Activated CD4-positive, alpha-beta memory T cell treated with anti-CD3 and anti-CD28 coated beads, Interleukin-2, amount 10 ng/mL, durations not matched to agents 7 days and 5 days (primary cell): ENCODE measurements at regions of chr1 and their contacts with region 1.

Region 1: GRCh38 chr1:153532769-153533599 is 2.8 kb downstream of the S100A6 start:
- DNase-seq: peak; percentile 89
- H3K4me3 Mint-ChIP-seq: peak overlapping the region; percentile 99
- H3K27ac Mint-ChIP-seq: peak overlapping the region; percentile 94
- H3K4me1 Mint-ChIP-seq: peaks cover 69% of the 10 kb centered on the region
- H3K27me3 Mint-ChIP-seq: no peaks in the 10 kb centered on the region

Region 2: GRCh38 chr1:153488731-153489130 is 44.3 kb before region 1 on chr1:
- CTCF ChIA-PET with region 1: no interaction called
- POLR2A ChIA-PET with region 1: no interaction called
- DNase-seq: no peak
- H3K4me3 Mint-ChIP-seq: no peak overlapping the region
- H3K27ac Mint-ChIP-seq: no peak overlapping the region
- H3K4me1 Mint-ChIP-seq: no peaks in the 10 kb centered on the region
- H3K27me3 Mint-ChIP-seq: peaks cover 31% of the 10 kb centered on the region

Region 3: DNA sequence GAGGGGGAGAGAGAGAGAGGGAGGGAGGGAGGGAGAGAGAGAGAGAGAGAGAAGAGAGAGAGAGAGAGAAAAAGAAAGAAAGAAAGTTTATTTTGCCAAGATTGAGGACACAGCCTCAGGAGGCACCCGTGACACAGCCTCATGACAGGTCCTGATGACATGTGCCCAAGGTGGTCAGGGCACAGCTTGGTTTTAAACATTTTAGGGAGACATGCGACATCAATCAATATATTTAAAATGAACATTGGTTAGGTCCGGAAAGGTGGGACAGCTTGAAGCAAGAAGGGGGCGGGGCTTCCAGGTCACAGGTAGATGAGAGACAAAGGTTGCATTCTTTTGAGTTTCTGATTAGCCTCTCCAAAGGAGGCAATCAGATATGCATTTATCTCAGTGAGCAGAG is 12.8 kb before region 1 on chr1:
- CTCF ChIA-PET with region 1: interaction called, 19 read pairs
- POLR2A ChIA-PET with region 1: interaction called, 38 read pairs
- DNase-seq: no peak
- H3K4me3 Mint-ChIP-seq: no peak overlapping the region
- H3K27ac Mint-ChIP-seq: no peak overlapping the region
- H3K4me1 Mint-ChIP-seq: peaks cover 17% of the 10 kb centered on the region
- H3K27me3 Mint-ChIP-seq: peaks cover 1% of the 10 kb centered on the region

Region 4: DNA sequence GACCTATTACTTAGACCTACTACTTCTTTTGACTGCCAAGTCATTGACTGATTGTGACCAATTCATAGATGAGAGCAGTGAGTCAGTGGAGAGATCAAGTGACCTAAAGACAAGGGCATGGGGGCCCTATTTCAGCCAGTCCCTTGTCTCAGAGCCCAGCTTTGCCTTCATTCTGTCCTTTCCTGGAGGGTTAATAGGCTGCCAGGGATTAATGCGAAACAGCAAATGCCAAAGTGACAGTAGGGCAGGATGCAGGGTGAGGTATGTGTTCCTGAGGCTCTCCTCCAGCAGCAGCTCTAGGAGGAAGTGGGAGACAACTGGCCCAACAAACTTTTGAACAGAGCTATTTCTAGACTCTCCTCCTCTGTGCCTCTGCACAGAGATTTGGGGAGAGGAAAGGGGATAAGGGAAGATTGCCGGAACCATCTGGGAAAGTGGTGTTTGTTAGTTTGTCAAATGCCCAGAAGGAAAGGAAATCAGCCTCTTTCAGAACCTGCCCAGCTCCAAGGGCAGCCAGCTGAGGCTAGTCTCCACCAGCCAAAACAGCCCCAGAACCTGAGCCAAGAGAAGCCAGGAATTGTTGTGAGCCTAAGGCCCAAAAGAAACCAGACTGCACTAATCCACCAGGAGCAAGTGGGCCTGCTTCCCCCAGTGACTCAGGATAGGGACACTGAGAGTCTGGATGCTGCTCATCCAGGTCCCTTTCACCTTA is 21.0 kb after region 1 on chr1:
- CTCF ChIA-PET with region 1: interaction called, 117 read pairs
- POLR2A ChIA-PET with region 1: interaction called, 188 read pairs
- DNase-seq: no peak
- H3K4me3 Mint-ChIP-seq: no peak overlapping the region
- H3K27ac Mint-ChIP-seq: no peak overlapping the region
- H3K4me1 Mint-ChIP-seq: peaks cover 15% of the 10 kb centered on the region
- H3K27me3 Mint-ChIP-seq: peaks cover 3% of the 10 kb centered on the region

Region 5: GRCh38 chr1:153572569-153573015 is 39.6 kb after region 1 on chr1:
- CTCF ChIA-PET with region 1: interaction called, 202 read pairs
- POLR2A ChIA-PET with region 1: interaction called, 138 read pairs
- DNase-seq: peak; percentile 69
- H3K4me3 Mint-ChIP-seq: no peak overlapping the region
- H3K27ac Mint-ChIP-seq: peak overlapping the region; percentile 54
- H3K4me1 Mint-ChIP-seq: peaks cover 49% of the 10 kb centered on the region
- H3K27me3 Mint-ChIP-seq: peaks cover 9% of the 10 kb centered on the region

Region 6: DNA sequence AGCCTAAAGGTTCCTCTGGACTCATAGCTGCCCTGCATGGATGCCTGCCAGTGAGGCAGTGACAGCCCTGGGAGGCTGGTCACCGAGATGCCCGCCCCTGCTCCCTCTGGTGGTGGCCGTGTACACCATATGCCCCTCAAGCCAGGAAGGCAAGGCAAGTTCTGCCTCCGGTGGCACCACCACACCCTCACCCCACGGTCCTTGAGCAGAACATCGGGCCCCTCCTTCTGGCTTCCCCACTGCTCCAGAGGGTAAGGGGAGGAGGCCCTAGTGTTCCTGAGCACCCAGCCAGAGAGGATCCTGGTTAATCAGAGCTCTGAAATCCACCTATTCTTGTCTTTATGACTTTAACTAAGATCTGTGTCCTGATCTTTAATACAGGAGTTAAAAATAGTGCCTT is 84.7 kb after region 1 on chr1:
- CTCF ChIA-PET with region 1: interaction called, 51 read pairs
- POLR2A ChIA-PET with region 1: interaction called, 14 read pairs
- DNase-seq: peak; percentile 75
- H3K4me3 Mint-ChIP-seq: no peak overlapping the region
- H3K27ac Mint-ChIP-seq: no peak overlapping the region
- H3K4me1 Mint-ChIP-seq: peaks cover 4% of the 10 kb centered on the region
- H3K27me3 Mint-ChIP-seq: no peaks in the 10 kb centered on the region